ENCODE measurements at regions of chr11 and their contacts with region 1.

Region 1: DNA sequence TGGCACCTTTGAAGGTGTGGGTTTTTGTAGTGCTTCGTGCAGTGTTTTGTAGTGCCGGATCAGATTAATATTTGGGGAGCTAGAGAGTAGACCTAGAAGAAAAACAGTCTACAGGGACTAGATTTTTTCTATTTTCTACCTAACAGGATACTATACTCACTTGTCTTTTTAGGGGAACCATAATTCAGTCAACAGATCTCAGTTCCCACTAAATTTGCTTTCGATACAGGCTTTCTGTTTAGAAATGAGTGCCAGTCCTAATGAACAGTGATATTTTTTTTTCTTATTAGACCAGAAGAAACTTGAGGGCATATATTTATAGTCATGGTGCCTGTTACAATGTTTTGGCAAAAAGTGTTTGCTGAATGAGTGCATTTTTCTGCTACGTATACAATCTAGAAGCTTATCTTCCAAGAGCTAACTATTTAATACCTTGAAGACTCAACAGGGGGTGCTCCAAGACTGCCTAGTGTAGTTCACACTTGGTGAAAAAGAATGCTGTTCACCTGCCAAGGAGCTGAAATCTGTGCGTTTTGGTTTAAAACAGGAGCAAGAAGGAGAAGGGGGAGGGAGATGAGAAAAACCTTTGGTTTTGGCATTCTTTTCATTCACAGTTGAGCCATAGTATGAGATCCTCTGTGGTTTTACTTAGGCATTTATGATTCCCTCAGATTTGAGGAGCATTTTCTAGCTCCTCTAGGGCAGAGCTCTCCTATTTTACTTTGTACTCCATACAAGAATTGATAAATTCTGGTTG is 44.9 kb upstream of the VSTM5 start:
- ATAC-seq: peak; percentile 43 to 87 (median 68)
- H3K4me3 ChIP-seq: no peak overlapping the region
- H3K27ac ChIP-seq: no peak overlapping the region
- H3K4me1 ChIP-seq: no peaks in the 10 kb centered on the region

Region 2: DNA sequence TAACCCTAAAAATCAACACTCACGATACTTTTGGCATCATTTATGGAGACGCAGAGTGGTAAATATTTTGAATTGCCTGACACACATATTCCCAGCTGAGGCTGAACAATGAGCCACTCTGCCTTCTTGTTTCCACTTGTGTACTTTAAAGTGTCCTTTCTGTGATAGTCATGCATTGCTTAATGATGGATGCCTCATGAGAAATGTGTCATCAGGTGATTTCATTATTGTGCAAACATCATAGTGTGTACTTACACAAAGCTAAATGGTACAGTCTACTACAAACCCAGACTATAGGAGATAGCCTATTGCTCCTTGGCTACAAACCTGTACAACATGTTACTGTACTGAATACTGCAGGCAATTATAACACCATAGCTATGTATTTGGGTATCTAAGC is 554.2 kb after region 1 on chr11:
- in situ Hi-C with region 1: loop called in 1 of 9 experiments (anchors 25 kb)
- ATAC-seq: peak in 7 of 8 experiments; percentile 70 to 93 (median 90)
- H3K4me3 ChIP-seq: no peak overlapping the region
- H3K27ac ChIP-seq: no peak overlapping the region
- H3K4me1 ChIP-seq: peaks cover 7 to 17% of the 10 kb centered on the region in 2 donors

Region 3: GRCh38 chr11:94493281-94494125 is 598.2 kb after region 1 on chr11 and contains the starts of genes ANKRD49 and MRE11:
- in situ Hi-C with region 1: loop called in 1 of 9 experiments (anchors 25 kb)
- ATAC-seq: peak; percentile 98 to 100 (median 99)
- H3K4me3 ChIP-seq: peak within 1 kb of the TSS; percentile 81 to 96 (median 85)
- H3K27ac ChIP-seq: peak within 1 kb of the TSS; percentile 40 to 65
- H3K4me1 ChIP-seq: peaks cover 0 to 10% of the 10 kb centered on the region in 2 donors
- total RNA-seq, gene ANKRD49: 12.1 to 21.2 (median 15.5) TPM
- total RNA-seq, gene MRE11: 6.0 to 38.1 (median 10.8) TPM

Region 4: DNA sequence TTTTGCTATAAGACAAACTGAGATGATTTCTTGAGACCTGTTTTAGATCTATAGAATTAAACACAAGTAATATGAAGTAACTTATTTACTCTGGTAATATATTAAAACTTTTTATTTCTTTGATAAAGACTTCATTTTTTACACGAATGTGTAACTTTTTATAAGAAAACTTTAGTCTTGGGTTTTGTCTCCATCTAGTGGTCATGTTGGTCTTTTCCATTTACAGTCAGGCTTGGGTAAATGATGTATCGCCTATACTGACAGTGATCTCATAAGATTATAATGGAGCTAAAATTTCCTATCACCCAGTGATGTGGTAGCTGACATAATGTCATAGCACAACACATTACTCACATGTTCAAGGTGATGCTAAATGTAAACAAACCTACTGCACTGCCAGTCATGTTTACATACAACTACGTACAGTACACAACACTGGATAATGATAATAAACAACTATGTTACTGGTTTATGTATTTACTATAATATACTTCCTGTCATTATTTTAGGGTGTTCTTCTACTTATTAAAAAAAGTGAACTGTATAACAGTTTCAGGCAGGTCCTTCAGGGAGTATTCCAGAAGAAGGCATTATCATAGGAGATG is 609.5 kb after region 1 on chr11:
- in situ Hi-C with region 1: loop called in 3 of 9 experiments (anchors 10 to 25 kb)
- ATAC-seq: peak in 5 of 8 experiments; percentile 50 to 77 (median 65)
- H3K4me3 ChIP-seq: no peak overlapping the region
- H3K27ac ChIP-seq: no peak overlapping the region
- H3K4me1 ChIP-seq: no peaks in the 10 kb centered on the region

Region 5: GRCh38 chr11:94511932-94512781 is 616.9 kb after region 1 on chr11 and contains the start of gene C11orf97:
- in situ Hi-C with region 1: loop called in 2 of 9 experiments (anchors 10 to 25 kb)
- ATAC-seq: peak; percentile 87 to 99 (median 98)
- H3K4me3 ChIP-seq: peak within 1 kb of the TSS; percentile 16 to 40 (median 29)
- H3K27ac ChIP-seq: no peak within 1 kb of the TSS
- H3K4me1 ChIP-seq: peaks cover 0 to 2% of the 10 kb centered on the region in 2 donors
- total RNA-seq, gene C11orf97: 1.00 TPM in 1 of 8 experiments, not detected in the others